Activated CD8-positive, alpha-beta memory T cell treated with anti-CD3 and anti-CD28 coated beads, Interleukin-2, amount 10 ng/mL, durations not matched to agents 7 days and 5 days (primary cell): ENCODE measurements at regions of chr5 and their contacts with region 1.

Region 1: GRCh38 chr5:139482050-139482889 is at the start of gene STING1:
- DNase-seq: peak; percentile 76
- ATAC-seq: peak; percentile 72
- H3K4me3 Mint-ChIP-seq: peak within 1 kb of the TSS; percentile 89
- H3K27ac Mint-ChIP-seq: peak within 1 kb of the TSS; percentile 98
- H3K4me1 Mint-ChIP-seq: peaks cover 35% of the 10 kb centered on the region
- H3K27me3 Mint-ChIP-seq: no peaks in the 10 kb centered on the region
- total RNA-seq, gene STING1: 103 to 115 TPM

Region 2: GRCh38 chr5:139439013-139439903 is 43.0 kb before region 1 on chr5 and contains the start of gene DNAJC18:
- CTCF ChIA-PET with region 1: interaction called, 15 read pairs
- DNase-seq: peak; percentile 94
- ATAC-seq: peak; percentile 89
- H3K4me3 Mint-ChIP-seq: peak within 1 kb of the TSS; percentile 98
- H3K27ac Mint-ChIP-seq: peak within 1 kb of the TSS; percentile 99
- H3K4me1 Mint-ChIP-seq: peaks cover 70% of the 10 kb centered on the region
- H3K27me3 Mint-ChIP-seq: no peaks in the 10 kb centered on the region
- total RNA-seq, gene DNAJC18: 9.2 to 25.7 TPM

Region 3: GRCh38 chr5:139495638-139496435 is 13.6 kb after region 1 on chr5:
- CTCF ChIA-PET with region 1: interaction called, 10 read pairs
- DNase-seq: no peak
- ATAC-seq: no peak
- H3K4me3 Mint-ChIP-seq: no peak overlapping the region
- H3K27ac Mint-ChIP-seq: no peak overlapping the region
- H3K4me1 Mint-ChIP-seq: peaks cover 18% of the 10 kb centered on the region
- H3K27me3 Mint-ChIP-seq: peaks cover 3% of the 10 kb centered on the region